Heart left ventricle (tissue), 16 donors: ENCODE measurements at regions of chr5 and their contacts with region 1.

Region 1: GRCh38 chr5:138077065-138077696 is 6.7 kb upstream of the WNT8A start:
- DNase-seq: peak in 4 of 5 donors; percentile 32 to 63 (median 43)
- ATAC-seq: peak in 3 of 4 donors; percentile 53 to 72 (median 67)
- H3K4me3 ChIP-seq: no peak overlapping the region
- H3K27ac ChIP-seq: no peak overlapping the region
- H3K4me1 ChIP-seq: peaks cover 0 to 10% (median 0%) of the 10 kb centered on the region in 12 donors
- H3K27me3 ChIP-seq: no peaks in the 10 kb centered on the region
- CTCF ChIP-seq: peak; percentile 67 to 91 (median 85)
- POLR2A ChIP-seq: no peak

Region 2: GRCh38 chr5:138024117-138024516 is 53.1 kb before region 1 on chr5:
- intact Hi-C with region 1: no loop called
- DNase-seq: no peak
- ATAC-seq: no peak
- H3K4me3 ChIP-seq: no peak overlapping the region
- H3K27ac ChIP-seq: no peak overlapping the region
- H3K4me1 ChIP-seq: peaks cover 0 to 64% (median 25%) of the 10 kb centered on the region in 12 donors
- H3K27me3 ChIP-seq: no peaks in the 10 kb centered on the region
- CTCF ChIP-seq: no peak
- POLR2A ChIP-seq: no peak

Region 3: DNA sequence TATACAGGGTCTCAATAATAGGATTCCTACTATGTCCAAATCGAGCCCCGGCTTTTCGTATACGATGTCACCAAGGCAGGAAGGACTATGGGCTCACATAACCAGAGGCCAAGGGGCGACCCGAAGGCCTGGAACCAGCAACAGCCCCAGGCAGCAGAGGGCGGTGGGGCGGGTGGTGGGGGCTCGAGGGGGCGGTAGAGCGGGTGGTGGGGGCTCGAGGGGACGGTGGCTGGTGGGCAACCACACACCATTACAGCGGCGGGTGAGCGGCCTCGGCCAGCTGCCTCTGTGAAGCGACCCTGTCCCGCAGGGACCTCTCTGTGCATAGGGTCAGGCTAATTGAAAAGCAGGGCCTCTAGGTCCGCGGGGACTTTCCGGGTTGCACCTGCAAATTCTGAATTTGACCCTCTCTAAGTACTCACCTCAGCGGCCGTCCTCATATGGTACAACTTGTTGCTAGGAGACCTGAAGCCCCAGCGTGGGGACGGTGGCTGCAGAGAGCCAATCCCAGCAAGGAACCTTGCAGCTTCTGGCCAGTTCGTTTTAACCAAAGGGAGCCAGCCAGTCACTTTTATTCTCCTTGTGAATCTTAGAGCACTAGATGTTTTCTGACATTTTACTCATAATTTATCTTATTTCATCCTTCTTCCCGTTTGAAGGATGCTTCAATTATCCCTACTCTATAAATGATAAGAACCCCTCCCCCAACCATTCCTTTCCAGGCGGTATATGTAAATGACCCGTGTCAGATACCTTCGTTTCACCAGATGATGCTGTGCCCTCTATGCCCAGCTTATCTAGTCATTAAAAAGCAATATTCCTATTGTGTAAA is 62.0 kb after region 1 on chr5 and contains the start of gene NME5:
- intact Hi-C with region 1: loop called in 3 of 10 experiments (anchors 2 to 5 kb)
- DNase-seq: peak; percentile 55 to 80 (median 76)
- ATAC-seq: peak; percentile 71 to 96 (median 94)
- H3K4me3 ChIP-seq: peak within 1 kb of the TSS in 11 of 12 donors; percentile 24 to 83 (median 66)
- H3K27ac ChIP-seq: peak within 1 kb of the TSS in 1 of 12 donors; percentile 16
- H3K4me1 ChIP-seq: peaks cover 0 to 7% (median 0%) of the 10 kb centered on the region in 12 donors
- H3K27me3 ChIP-seq: peaks cover 0 to 22% (median 0%) of the 10 kb centered on the region in 9 donors
- CTCF ChIP-seq: no peak
- POLR2A ChIP-seq: no peak
- total RNA-seq, gene NME5: 0.50 to 5.1 (median 3.4) TPM